AG04449 (cell line): ENCODE measurements at regions of chr9 and their contacts with region 1.

Region 1: GRCh38 chr9:135602789-135603481 is 36.4 kb downstream of the GLT6D1 start:
- DNase-seq: no peak
- H3K4me3 ChIP-seq: no peak overlapping the region
- CTCF ChIP-seq: peak; percentile 73

Region 2: DNA sequence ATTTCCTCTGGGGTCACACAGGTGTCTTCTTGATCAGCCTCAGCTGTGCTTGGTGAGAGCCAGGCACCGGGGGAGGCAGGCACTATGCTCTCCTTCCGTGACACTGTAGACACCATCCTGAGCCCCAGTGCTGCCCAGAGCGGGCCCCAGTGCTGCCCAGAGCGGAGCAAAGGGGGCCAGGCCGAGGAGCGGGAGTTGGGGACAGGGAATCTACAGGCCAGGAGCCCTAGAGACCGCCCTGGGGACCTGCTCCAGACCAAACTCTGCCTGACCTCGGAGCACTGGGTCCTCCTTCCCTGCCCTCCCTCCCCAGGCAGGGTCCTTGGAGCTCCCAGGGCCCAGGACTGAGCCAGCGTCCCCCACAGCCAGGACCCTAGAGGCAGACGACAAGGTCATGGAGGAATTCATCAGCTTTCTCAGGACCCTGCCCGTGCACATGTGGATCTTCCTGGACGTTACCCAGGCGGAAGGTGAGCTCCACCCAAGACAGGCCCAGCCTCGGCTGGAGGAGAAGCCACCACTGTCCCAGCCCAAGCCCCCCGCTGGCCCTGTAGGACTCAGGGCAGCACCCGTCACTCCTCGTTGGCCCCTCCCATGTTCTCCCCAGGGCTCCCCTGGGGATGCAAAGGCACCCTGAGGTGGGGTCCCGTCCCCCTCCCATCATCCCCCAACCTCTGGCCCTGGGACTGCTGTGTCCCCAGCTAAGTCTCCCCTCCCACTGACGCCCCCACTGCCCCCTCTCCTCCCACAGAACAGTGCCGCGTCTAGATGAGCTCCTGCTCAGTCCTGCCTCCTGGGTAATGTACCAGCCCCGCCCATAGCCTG is 11.2 kb before region 1 on chr9:
- CTCF ChIA-PET with region 1: interaction called, 12 read pairs
- POLR2A ChIA-PET with region 1: no interaction called
- DNase-seq: no peak
- H3K4me3 ChIP-seq: no peak overlapping the region
- CTCF ChIP-seq: no peak

Region 3: GRCh38 chr9:135615666-135616618 is 13.0 kb after region 1 on chr9:
- CTCF ChIA-PET with region 1: interaction called, 23 read pairs
- POLR2A ChIA-PET with region 1: no interaction called
- DNase-seq: no peak
- H3K4me3 ChIP-seq: no peak overlapping the region
- CTCF ChIP-seq: no peak

Region 4: DNA sequence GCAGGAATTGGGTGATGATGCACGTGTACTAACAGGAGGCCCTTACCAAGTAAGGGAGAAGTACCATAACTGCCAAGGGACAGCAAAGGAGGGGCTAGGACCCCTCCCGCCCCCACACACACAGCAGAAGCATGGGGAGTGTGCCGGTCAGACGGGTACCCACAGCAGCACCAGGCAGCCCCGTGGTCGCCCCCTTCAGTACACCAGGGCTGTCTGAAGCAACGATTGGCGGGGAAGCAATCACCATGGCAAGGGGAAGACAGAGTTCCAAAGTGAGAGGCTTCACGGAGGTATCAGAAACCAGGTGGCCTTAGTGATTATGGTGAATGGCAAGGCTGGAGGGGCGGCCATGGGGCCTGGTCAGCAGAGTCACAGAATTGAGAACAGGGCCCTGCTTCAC is 232.2 kb after region 1 on chr9:
- CTCF ChIA-PET with region 1: no interaction called
- POLR2A ChIA-PET with region 1: no interaction called
- DNase-seq: no peak
- H3K4me3 ChIP-seq: no peak overlapping the region
- CTCF ChIP-seq: no peak